B cell (primary cell): ENCODE measurements at regions of chr17 and their contacts with region 1.

Region 1: DNA sequence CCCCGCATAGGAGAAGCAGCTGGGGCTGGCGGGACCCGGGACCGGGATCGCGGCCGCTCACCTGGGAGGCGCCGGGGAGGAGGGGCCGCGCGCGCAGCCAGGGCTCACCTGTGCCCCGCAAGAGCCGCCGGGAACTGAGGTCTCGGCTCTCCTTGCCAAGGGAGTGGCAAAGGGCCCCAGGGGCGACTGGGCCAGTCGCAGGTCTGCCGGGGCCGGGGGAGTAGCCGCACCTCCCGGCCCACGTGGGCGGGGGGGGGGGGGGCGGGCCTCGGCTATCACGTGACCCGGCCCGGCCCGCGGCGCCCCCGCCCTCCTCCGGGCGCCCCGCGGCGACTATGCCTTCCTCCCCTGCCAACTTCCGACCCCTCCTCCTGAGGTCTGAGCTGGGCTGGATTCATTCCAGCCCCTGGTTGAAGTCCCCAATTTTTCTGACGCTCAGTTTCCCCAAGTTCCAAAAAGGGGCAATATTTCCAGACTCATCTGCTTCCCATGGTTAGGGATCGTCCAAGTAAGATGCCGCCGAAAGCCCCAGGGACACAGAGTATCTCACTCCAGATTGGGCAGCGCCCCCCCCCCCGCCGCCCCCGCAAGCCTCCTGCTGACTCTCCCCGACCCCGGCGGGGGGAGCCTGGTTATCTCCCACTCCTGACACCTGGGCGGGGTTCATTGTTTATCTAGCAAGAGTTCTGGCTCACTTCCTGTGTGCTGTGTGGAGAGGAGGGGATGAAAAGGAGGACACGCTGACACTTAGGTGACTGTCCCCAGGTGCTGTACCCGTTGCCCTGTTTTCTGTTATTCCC is at the start of gene TMC6:
- DNase-seq: peak; percentile 88
- ATAC-seq: peak; percentile 21
- H3K4me3 ChIP-seq: peak within 1 kb of the TSS; percentile 38 to 97 (median 89)
- H3K4me3 Mint-ChIP-seq: peak within 1 kb of the TSS; percentile 96
- H3K27ac ChIP-seq: peak within 1 kb of the TSS; percentile 88 to 92
- H3K27ac Mint-ChIP-seq: peak within 1 kb of the TSS; percentile 99
- H3K4me1 ChIP-seq: peaks cover 68 to 80% of the 10 kb centered on the region in 2 donors
- H3K4me1 Mint-ChIP-seq: peaks cover 73% of the 10 kb centered on the region
- H3K27me3 ChIP-seq: no peaks in the 10 kb centered on the region
- H3K27me3 Mint-ChIP-seq: no peaks in the 10 kb centered on the region
- CTCF ChIP-seq: no peak
- total RNA-seq, gene TMC6: 891 and 910 TPM in 2 replicates

Region 2: DNA sequence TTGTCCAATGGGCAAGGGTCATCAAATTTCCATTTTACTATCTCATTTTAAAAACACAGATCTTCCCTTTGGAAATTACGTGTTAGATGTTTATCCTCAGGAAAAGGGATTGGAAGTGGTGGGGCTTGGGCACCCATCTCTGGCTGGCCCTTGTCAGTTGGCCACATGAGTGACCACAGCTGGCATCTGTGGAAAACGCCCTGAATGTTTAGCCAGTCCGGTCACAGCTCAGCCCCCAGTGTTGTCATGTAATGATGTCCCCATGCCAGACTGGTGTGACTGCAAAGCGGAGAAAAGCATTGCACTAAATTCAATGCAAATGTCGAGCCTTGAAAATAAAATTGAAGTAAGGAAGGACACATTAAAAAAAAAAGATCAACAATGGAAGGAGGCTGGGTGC is 53.2 kb before region 1 on chr17:
- CTCF ChIA-PET with region 1: no interaction called
- POLR2A ChIA-PET with region 1: no interaction called
- intact Hi-C with region 1: no loop called
- DNase-seq: no peak
- ATAC-seq: no peak
- H3K4me3 ChIP-seq: no peak overlapping the region
- H3K4me3 Mint-ChIP-seq: no peak overlapping the region
- H3K27ac ChIP-seq: no peak overlapping the region
- H3K27ac Mint-ChIP-seq: no peak overlapping the region
- H3K4me1 ChIP-seq: no peaks in the 10 kb centered on the region
- H3K4me1 Mint-ChIP-seq: no peaks in the 10 kb centered on the region
- H3K27me3 ChIP-seq: no peaks in the 10 kb centered on the region
- H3K27me3 Mint-ChIP-seq: no peaks in the 10 kb centered on the region
- CTCF ChIP-seq: no peak

Region 3: DNA sequence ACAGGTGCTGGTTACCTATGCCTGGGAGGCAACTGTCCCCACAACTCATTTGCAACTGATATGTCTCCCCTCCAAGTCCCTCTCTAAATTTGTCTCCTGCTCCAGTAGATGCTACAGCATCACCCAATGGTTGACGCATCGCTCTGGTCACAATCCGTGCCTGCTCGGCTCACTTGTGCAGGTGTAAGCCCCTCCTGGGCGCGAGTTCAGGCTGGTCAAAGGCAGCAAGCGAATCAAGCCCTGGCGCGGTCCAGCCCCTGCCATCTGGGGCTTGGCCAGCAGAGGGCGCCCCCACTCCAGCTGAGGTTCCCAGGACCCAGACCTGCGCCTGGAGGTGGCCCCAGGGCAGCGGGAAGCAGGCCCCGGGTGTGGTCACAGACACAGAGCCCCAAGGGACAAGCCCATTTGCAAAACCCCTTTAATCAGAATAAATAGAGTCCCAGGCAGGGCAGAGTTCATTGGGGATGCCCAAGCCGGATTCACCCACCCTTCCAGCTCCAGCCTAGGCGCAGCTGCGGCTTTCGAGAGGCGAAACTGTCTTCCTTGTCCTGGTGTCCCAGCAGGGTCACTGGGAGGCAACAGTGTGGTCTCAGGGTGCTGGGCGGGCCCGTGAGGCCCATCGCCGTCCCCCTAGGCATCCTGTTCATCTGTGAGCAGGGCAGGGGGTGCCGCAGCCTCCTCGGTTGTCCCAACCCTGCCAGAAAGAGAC is 16.1 kb before region 1 on chr17:
- CTCF ChIA-PET with region 1: interaction called, 38 read pairs
- POLR2A ChIA-PET with region 1: interaction called, 9 read pairs
- intact Hi-C with region 1: no loop called
- DNase-seq: peak; percentile 84
- ATAC-seq: peak; percentile 84
- H3K4me3 ChIP-seq: no peak overlapping the region
- H3K4me3 Mint-ChIP-seq: no peak overlapping the region
- H3K27ac ChIP-seq: peak overlapping the region in 1 of 2 donors; percentile 43
- H3K27ac Mint-ChIP-seq: peak overlapping the region; percentile 96
- H3K4me1 ChIP-seq: peaks cover 12 to 22% of the 10 kb centered on the region in 2 donors
- H3K4me1 Mint-ChIP-seq: peaks cover 24% of the 10 kb centered on the region
- H3K27me3 ChIP-seq: no peaks in the 10 kb centered on the region
- H3K27me3 Mint-ChIP-seq: no peaks in the 10 kb centered on the region
- CTCF ChIP-seq: peak; percentile 98

Region 4: DNA sequence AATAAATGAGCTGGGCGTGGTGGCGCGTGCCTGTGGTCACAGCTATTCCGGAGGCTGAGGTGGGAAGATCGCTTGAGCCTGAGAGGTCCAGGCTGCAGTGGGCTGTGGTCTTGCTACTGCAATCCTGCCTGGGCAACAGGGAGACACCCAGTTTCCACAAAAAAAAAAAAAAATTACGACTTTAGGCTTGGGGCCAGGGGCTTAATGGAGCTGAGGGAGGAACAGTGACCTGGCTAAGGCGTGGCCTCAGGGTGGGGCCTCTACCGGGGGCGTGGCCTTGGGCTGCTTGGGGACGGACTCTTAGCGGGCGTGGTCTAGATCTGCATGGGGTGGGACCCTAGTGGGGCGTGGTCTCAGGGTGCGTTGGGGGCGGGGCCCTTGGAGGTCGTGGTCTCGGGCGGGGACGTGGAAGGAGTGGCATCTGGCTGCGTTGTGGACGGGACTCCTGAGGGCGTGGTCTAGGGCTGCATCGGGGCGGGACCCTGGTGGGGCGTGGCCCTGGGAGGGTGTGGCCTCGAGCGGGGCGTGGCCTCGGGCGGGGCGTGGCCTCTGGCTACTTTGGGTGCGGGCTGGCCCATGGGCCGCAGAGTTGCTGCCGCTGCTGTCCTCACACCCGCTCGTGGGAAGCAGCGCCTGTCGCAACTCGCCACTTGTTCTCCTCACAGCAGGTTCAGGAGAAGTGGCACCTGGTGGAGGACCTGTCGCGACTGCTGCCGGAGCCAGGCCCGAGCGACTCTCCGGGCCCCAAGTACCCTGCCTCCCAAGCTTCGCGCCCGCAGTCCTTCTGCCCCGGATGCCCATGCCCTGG is 11.6 kb after region 1 on chr17:
- CTCF ChIA-PET with region 1: interaction called, 25 read pairs
- POLR2A ChIA-PET with region 1: interaction called, 71 read pairs
- intact Hi-C with region 1: loop called (anchors 1 kb)
- DNase-seq: peak; percentile 96
- ATAC-seq: peak; percentile 88
- H3K4me3 ChIP-seq: no peak overlapping the region
- H3K4me3 Mint-ChIP-seq: peak overlapping the region; percentile 46
- H3K27ac ChIP-seq: peak overlapping the region; percentile 43 to 51
- H3K27ac Mint-ChIP-seq: peak overlapping the region; percentile 73
- H3K4me1 ChIP-seq: peaks cover 71 to 94% of the 10 kb centered on the region in 2 donors
- H3K4me1 Mint-ChIP-seq: peaks cover 82% of the 10 kb centered on the region
- H3K27me3 ChIP-seq: no peaks in the 10 kb centered on the region
- H3K27me3 Mint-ChIP-seq: no peaks in the 10 kb centered on the region
- CTCF ChIP-seq: no peak

Region 5: GRCh38 chr17:78147315-78147998 is 18.7 kb after region 1 on chr17:
- CTCF ChIA-PET with region 1: interaction called, 10 read pairs
- POLR2A ChIA-PET with region 1: interaction called, 71 read pairs
- intact Hi-C with region 1: loop called (anchors 2 kb)
- DNase-seq: peak; percentile 94
- ATAC-seq: peak; percentile 82
- H3K4me3 ChIP-seq: peak overlapping the region in 1 of 5 experiments; percentile 27
- H3K4me3 Mint-ChIP-seq: peak overlapping the region; percentile 79
- H3K27ac ChIP-seq: peak overlapping the region; percentile 97 to 98
- H3K27ac Mint-ChIP-seq: peak overlapping the region; percentile 95
- H3K4me1 ChIP-seq: peaks cover 69 to 90% of the 10 kb centered on the region in 2 donors
- H3K4me1 Mint-ChIP-seq: peaks cover 73% of the 10 kb centered on the region
- H3K27me3 ChIP-seq: no peaks in the 10 kb centered on the region
- H3K27me3 Mint-ChIP-seq: no peaks in the 10 kb centered on the region
- CTCF ChIP-seq: no peak

Region 6: GRCh38 chr17:78168242-78168902 is 39.6 kb after region 1 on chr17 and contains the start of gene SYNGR2:
- CTCF ChIA-PET with region 1: interaction called, 357 read pairs
- POLR2A ChIA-PET with region 1: interaction called, 432 read pairs
- intact Hi-C with region 1: loop called (anchors 2 kb)
- DNase-seq: peak; percentile 91
- ATAC-seq: peak; percentile 71
- H3K4me3 ChIP-seq: peak within 1 kb of the TSS; percentile 1 to 88 (median 74)
- H3K4me3 Mint-ChIP-seq: peak within 1 kb of the TSS; percentile 83
- H3K27ac ChIP-seq: peak within 1 kb of the TSS; percentile 93 to 97
- H3K27ac Mint-ChIP-seq: peak within 1 kb of the TSS; percentile 90
- H3K4me1 ChIP-seq: peaks cover 46 to 58% of the 10 kb centered on the region in 2 donors
- H3K4me1 Mint-ChIP-seq: peaks cover 51% of the 10 kb centered on the region
- H3K27me3 ChIP-seq: no peaks in the 10 kb centered on the region
- H3K27me3 Mint-ChIP-seq: no peaks in the 10 kb centered on the region
- CTCF ChIP-seq: no peak
- total RNA-seq, gene SYNGR2: 380 and 390 TPM in 2 replicates